Activated B cell treated with CpG ODN at 0.5 μM for 24 hours (primary cell): ENCODE measurements at regions of chr7 and their contacts with region 1.

Region 1: GRCh38 chr7:120987683-120988590 is 574 bp upstream of the CPED1 start:
- DNase-seq: peak; percentile 68
- ATAC-seq: peak; percentile 95
- H3K4me3 Mint-ChIP-seq: peak overlapping the region; percentile 81
- H3K27ac Mint-ChIP-seq: no peak overlapping the region
- H3K4me1 Mint-ChIP-seq: peaks cover 23% of the 10 kb centered on the region
- H3K27me3 Mint-ChIP-seq: peaks cover 33% of the 10 kb centered on the region
- CTCF ChIP-seq: peak; percentile 95

Region 2: DNA sequence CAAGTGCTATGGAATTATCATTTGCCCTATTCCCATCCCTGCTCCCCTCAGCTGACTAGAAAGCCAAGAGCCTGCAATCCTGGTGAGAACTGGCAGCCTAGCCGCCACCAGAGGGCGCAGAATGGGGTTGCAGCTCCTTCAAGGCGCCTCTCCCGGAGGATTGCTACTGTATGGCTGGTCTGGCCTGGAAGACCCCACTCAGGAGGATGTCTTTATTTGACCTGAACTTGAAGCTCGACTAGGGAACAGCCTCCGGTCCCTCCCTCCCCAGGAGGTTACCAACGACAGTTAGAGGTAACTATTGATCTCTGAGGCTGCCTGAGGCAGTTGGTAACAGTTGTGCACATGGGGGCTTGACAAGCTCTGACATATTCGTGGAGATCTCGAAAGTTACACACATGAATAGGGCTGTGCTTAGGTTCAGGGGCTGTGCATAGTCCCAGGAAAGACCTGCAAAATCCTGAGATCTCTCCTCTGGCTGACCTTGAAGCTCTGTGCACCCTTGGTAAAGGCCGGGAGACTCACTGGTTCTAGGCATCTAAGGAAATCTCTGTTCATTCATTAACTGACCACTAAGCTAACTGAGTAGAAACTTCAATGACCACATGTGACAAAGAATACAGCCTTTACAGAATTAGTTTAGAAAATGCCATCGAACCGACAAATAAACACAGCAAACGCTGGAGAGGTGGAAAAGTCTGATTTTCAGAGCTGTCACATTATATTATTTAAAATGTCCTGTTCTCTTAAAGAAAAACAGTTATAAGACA is 195.7 kb before region 1 on chr7:
- CTCF ChIA-PET with region 1: interaction called, 3 read pairs
- POLR2A ChIA-PET with region 1: no interaction called
- intact Hi-C with region 1: loop called (anchors 1 kb)
- DNase-seq: peak; percentile 50
- ATAC-seq: peak; percentile 73
- H3K4me3 Mint-ChIP-seq: no peak overlapping the region
- H3K27ac Mint-ChIP-seq: no peak overlapping the region
- H3K4me1 Mint-ChIP-seq: no peaks in the 10 kb centered on the region
- H3K27me3 Mint-ChIP-seq: peaks cover 2% of the 10 kb centered on the region
- CTCF ChIP-seq: peak; percentile 74

Region 3: DNA sequence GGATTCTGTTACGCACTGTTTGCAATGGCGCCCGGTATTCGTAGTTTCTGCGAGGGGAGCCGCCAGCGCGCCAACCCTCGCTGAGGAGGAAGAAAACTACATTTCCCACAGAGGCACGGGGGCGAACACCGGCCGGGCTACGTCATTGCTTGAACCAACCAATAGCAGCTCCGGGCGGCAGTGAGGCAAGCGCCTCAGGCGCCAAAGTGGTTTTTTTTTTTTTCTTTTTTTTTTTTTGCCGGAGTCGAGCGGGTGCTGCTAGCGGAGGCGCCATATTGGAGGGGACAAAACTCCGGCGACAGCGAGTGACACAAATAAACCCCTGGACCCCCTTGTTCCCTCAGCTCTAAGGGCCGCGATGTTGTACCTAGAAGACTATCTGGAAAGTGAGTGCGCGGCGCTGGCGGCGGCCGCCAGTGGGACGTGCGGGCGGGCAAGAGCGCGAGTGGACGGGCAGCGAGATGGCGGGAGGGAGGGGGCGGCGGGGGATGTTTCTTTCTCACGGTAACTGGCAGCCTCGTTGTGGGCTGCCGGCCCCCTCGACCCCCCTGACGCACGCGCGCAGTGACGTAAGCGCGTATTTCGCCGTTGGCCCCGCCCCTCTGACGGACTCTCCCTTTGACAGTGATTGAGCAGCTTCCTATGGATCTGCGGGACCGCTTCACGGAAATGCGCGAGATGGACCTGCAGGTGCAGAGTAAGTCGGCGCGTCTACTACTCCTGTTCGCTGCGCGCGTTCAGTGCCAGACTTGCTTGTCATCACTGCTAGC is 37.2 kb before region 1 on chr7 and contains the start of gene ING3:
- CTCF ChIA-PET with region 1: interaction called, 3 read pairs
- POLR2A ChIA-PET with region 1: interaction called, 6 read pairs
- intact Hi-C with region 1: loop called (anchors 1 kb)
- DNase-seq: peak; percentile 99
- ATAC-seq: peak; percentile 89
- H3K4me3 Mint-ChIP-seq: peak within 1 kb of the TSS; percentile 95
- H3K27ac Mint-ChIP-seq: peak within 1 kb of the TSS; percentile 99
- H3K4me1 Mint-ChIP-seq: peaks cover 26% of the 10 kb centered on the region
- H3K27me3 Mint-ChIP-seq: peaks cover 3% of the 10 kb centered on the region
- CTCF ChIP-seq: no peak
- total RNA-seq, gene ING3: 32.7 and 36.1 TPM in 2 replicates

Region 4: DNA sequence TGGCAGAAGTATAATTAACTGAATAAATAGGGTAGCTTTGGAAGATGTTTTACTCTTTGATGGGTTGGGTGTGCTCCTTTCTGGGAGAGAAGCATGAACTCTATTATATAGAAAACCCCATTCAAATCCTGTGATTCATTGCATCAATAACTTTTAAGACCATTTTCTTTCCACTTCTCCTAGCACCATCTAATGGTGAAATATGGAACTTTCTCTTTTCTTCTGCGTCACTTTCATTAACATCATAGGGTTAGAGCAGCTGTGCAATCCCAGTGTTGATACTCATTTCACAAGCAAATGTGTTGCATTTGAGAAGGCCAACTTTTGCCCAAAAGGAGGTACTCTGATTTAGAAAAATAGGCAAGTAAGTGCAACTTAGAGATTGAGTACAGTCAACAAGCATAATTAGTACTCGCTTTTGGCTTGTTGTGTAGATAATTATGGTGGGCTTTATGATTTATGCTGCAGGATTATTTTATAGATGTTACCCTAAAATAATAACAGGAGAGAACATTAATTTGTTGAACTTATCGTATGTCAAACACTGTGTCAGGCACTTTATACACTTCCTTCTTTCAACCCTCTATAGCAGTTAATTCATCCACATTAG is 93.5 kb after region 1 on chr7:
- CTCF ChIA-PET with region 1: interaction called, 48 read pairs
- POLR2A ChIA-PET with region 1: no interaction called
- intact Hi-C with region 1: loop called (anchors 1 kb)
- DNase-seq: no peak
- ATAC-seq: peak; percentile 83
- H3K4me3 Mint-ChIP-seq: no peak overlapping the region
- H3K27ac Mint-ChIP-seq: no peak overlapping the region
- H3K4me1 Mint-ChIP-seq: peaks cover 11% of the 10 kb centered on the region
- H3K27me3 Mint-ChIP-seq: peaks cover 3% of the 10 kb centered on the region
- CTCF ChIP-seq: peak; percentile 46

Region 5: DNA sequence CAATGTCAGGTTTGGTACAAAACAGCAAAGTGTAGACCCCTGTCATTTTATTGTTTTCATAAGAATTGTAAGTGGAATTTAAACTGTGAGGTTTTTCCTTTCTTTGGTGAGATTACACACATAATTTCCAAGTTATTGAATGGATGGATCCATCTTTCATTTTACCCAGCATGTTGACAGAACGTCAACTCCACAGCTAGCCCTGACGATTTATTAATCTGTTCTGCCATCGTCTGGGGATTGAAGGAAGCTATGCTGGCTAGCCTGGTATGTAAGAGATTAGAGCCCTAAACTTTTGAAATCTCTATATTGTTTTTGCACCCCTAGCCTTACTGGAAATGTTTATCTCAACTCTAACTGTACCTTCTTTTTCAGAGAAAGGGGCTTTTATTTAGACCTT is 349.5 kb after region 1 on chr7:
- CTCF ChIA-PET with region 1: interaction called, 4 read pairs
- POLR2A ChIA-PET with region 1: no interaction called
- intact Hi-C with region 1: loop called (anchors 1 kb)
- DNase-seq: no peak
- ATAC-seq: peak; percentile 72
- H3K4me3 Mint-ChIP-seq: no peak overlapping the region
- H3K27ac Mint-ChIP-seq: peak overlapping the region; percentile 41
- H3K4me1 Mint-ChIP-seq: peaks cover 9% of the 10 kb centered on the region
- H3K27me3 Mint-ChIP-seq: no peaks in the 10 kb centered on the region
- CTCF ChIP-seq: no peak

Region 6: GRCh38 chr7:121563177-121563576 is 575.2 kb after region 1 on chr7:
- CTCF ChIA-PET with region 1: no interaction called
- POLR2A ChIA-PET with region 1: no interaction called
- intact Hi-C with region 1: no loop called
- DNase-seq: no peak
- ATAC-seq: no peak
- H3K4me3 Mint-ChIP-seq: no peak overlapping the region
- H3K27ac Mint-ChIP-seq: no peak overlapping the region
- H3K4me1 Mint-ChIP-seq: no peaks in the 10 kb centered on the region
- H3K27me3 Mint-ChIP-seq: peaks cover 6% of the 10 kb centered on the region
- CTCF ChIP-seq: no peak